ENCODE measurements at regions of chr19 and their contacts with region 1.

Region 1: GRCh38 chr19:56314562-56315077 is at the start of gene ZSCAN5A:
- DNase-seq: peak; percentile 98
- H3K4me3 ChIP-seq: peak within 1 kb of the TSS; percentile 66 to 89 (median 76)
- H3K27ac ChIP-seq: peak within 1 kb of the TSS; percentile 98
- H3K4me1 ChIP-seq: peaks cover 12% of the 10 kb centered on the region
- H3K27me3 ChIP-seq: no peaks in the 10 kb centered on the region
- CTCF ChIP-seq: no peak
- POLR2A ChIP-seq: peak; percentile 54
- total RNA-seq, gene ZSCAN5A: 12.0 and 12.2 TPM in 2 replicates

Region 2: GRCh38 chr19:56080669-56081401 is 233.8 kb before region 1 on chr19:
- CTCF ChIA-PET with region 1: interaction called, 15 read pairs
- POLR2A ChIA-PET with region 1: no interaction called
- dilution Hi-C with region 1: no loop called
- intact Hi-C with region 1: no loop called
- DNase-seq: peak; percentile 83
- H3K4me3 ChIP-seq: peak overlapping the region; percentile 10 to 38 (median 32)
- H3K27ac ChIP-seq: no peak overlapping the region
- H3K4me1 ChIP-seq: peaks cover 8% of the 10 kb centered on the region
- H3K27me3 ChIP-seq: peaks cover 0 to 3% of the 10 kb centered on the region in 2 experiments
- CTCF ChIP-seq: peak; percentile 58 to 81
- POLR2A ChIP-seq: no peak

Region 3: DNA sequence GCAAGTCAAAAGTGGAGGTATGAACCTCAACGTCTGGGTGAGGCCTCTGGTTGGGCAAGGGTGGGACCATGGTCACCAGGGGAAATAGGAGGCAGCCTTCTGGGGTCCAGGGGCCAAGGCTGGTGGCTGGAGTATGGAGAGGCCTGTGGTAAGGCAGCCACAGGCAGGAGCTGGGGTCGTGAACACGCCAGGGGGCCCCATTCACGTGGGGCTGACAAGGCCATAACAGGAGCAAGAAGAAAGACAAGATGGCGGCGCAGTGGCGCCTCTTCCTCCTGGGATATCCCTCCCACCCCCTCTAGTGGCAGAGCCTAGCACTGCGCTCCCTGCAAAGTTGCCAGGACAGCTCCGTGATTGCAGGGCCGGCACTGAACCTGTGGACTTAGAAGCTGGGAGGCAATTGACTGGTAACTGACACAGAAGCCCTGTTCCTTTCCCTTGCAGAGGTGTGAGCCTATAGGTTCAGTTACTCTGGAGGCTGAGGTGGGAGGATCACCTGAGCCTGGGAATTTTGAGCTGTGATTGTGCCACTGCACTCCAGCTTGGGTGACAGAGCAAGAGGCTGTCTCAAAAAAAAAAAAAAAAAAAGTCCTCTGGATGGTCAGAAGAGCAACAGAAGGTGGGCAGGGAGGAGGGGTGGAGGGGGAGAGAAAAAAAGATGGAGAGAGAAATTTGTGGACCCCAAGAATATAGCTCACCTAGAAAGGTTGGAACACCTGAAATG is 61.8 kb before region 1 on chr19:
- CTCF ChIA-PET with region 1: interaction called, 254 read pairs
- POLR2A ChIA-PET with region 1: no interaction called
- dilution Hi-C with region 1: no loop called
- intact Hi-C with region 1: loop called (anchors 1 kb)
- DNase-seq: peak; percentile 70
- H3K4me3 ChIP-seq: no peak overlapping the region
- H3K27ac ChIP-seq: no peak overlapping the region
- H3K4me1 ChIP-seq: no peaks in the 10 kb centered on the region
- H3K27me3 ChIP-seq: no peaks in the 10 kb centered on the region
- CTCF ChIP-seq: peak; percentile 88 to 94
- POLR2A ChIP-seq: no peak

Region 4: GRCh38 chr19:56301182-56301581 is 13.4 kb before region 1 on chr19:
- CTCF ChIA-PET with region 1: interaction called, 44 read pairs
- POLR2A ChIA-PET with region 1: interaction called, 6 read pairs
- dilution Hi-C with region 1: no loop called
- intact Hi-C with region 1: no loop called
- DNase-seq: peak; percentile 37
- H3K4me3 ChIP-seq: no peak overlapping the region
- H3K27ac ChIP-seq: peak overlapping the region; percentile 35
- H3K4me1 ChIP-seq: peaks cover 15% of the 10 kb centered on the region
- H3K27me3 ChIP-seq: no peaks in the 10 kb centered on the region
- CTCF ChIP-seq: peak; percentile 13 to 28
- POLR2A ChIP-seq: no peak

Region 5: GRCh38 chr19:56356944-56357343 is 42.3 kb after region 1 on chr19:
- CTCF ChIA-PET with region 1: no interaction called
- POLR2A ChIA-PET with region 1: no interaction called
- dilution Hi-C with region 1: no loop called
- intact Hi-C with region 1: no loop called
- DNase-seq: no peak
- H3K4me3 ChIP-seq: no peak overlapping the region
- H3K27ac ChIP-seq: no peak overlapping the region
- H3K4me1 ChIP-seq: no peaks in the 10 kb centered on the region
- H3K27me3 ChIP-seq: no peaks in the 10 kb centered on the region
- CTCF ChIP-seq: no peak
- POLR2A ChIP-seq: no peak

Region 6: GRCh38 chr19:56393119-56394012 is 78.7 kb after region 1 on chr19 and contains the start of gene ZNF582:
- CTCF ChIA-PET with region 1: interaction called, 3 read pairs
- POLR2A ChIA-PET with region 1: no interaction called
- dilution Hi-C with region 1: no loop called
- intact Hi-C with region 1: loop called (anchors 1 kb)
- DNase-seq: peak; percentile 94
- H3K4me3 ChIP-seq: peak within 1 kb of the TSS in 2 of 3 experiments; percentile 17 to 64
- H3K27ac ChIP-seq: peak within 1 kb of the TSS; percentile 26
- H3K4me1 ChIP-seq: no peaks in the 10 kb centered on the region
- H3K27me3 ChIP-seq: no peaks in the 10 kb centered on the region
- CTCF ChIP-seq: peak; percentile 75 to 87
- POLR2A ChIP-seq: peak; percentile 70
- total RNA-seq, gene ZNF582: 2.2 and 2.9 TPM in 2 replicates

Measured in endothelial cell of umbilical vein (primary cell).